Transverse colon (tissue), 4 donors: ENCODE measurements at regions of chr6 and their contacts with region 1.

Region 1: DNA sequence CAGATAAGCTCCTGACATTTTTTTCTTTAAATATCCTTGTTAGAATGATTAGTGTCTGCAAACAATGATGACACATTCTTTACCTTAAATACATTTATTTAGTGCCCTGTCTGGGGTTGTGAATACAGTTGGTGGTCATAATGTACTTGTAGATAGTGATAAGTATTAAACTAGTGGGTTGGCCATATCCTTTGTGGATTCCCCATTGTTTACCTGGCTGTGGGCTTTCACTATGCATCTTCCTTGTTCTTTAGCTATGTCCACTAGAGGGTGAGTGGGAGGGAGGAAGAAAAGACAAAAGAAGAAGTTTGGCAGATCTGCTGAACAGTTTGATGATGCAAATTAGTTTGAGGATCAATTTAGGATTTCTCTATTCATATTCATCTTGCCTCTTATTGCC is 15.7 kb downstream of the HS3ST5 start:
- DNase-seq: no peak
- H3K4me3 ChIP-seq: no peak overlapping the region
- H3K27ac ChIP-seq: no peak overlapping the region
- H3K4me1 ChIP-seq: no peaks in the 10 kb centered on the region
- H3K27me3 ChIP-seq: no peaks in the 10 kb centered on the region
- CTCF ChIP-seq: no peak
- EP300 ChIP-seq: no peak
- POLR2A ChIP-seq: no peak

Region 2: GRCh38 chr6:114108119-114109002 is 218.7 kb before region 1 on chr6:
- in situ Hi-C with region 1: no loop called
- intact Hi-C with region 1: loop called (anchors 10 kb)
- DNase-seq: peak; percentile 56
- H3K4me3 ChIP-seq: no peak overlapping the region
- H3K27ac ChIP-seq: no peak overlapping the region
- H3K4me1 ChIP-seq: no peaks in the 10 kb centered on the region
- H3K27me3 ChIP-seq: no peaks in the 10 kb centered on the region
- CTCF ChIP-seq: peak; percentile 18 to 50 (median 32)
- EP300 ChIP-seq: no peak
- POLR2A ChIP-seq: no peak

Region 3: DNA sequence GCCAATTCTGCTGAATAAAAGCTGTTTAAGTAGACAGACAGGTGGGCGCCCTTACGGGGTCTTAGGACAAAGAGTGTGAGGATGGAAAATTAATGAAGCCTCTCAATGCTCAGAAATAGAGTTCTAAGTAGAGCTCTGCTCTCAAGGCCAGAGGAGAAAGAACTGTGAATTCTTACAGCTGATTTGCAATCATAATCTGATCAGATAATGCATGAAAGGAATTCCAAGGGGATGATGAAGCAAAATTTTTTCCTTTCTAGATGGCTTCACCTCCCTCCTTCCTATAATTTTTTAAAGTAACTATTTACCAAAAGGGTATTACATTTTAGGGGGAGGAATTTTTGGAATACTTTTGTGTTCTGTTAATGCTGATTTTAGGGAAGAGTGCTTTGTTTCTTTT is 323.8 kb after region 1 on chr6:
- in situ Hi-C with region 1: no loop called
- intact Hi-C with region 1: no loop called
- DNase-seq: no peak
- H3K4me3 ChIP-seq: no peak overlapping the region
- H3K27ac ChIP-seq: no peak overlapping the region
- H3K4me1 ChIP-seq: no peaks in the 10 kb centered on the region
- H3K27me3 ChIP-seq: no peaks in the 10 kb centered on the region
- CTCF ChIP-seq: no peak
- EP300 ChIP-seq: no peak
- POLR2A ChIP-seq: no peak

Region 4: DNA sequence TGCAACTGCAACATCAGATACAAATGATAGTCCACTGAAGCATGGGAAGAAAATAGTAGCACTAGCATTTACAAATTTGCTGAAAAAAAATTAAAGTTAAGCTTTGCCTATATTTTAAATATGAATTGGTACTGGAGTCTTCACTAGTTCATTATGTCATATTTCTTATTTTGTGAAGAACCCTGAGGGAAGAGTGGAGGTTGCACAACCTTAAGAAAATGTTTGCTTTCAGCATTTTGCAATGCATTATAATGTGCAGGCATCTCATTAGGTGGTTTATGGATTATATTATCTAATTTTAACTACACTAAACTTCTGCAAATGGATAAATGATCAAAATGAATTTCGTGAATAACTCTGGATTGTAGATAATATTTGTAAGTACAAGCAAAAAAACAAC is 406.5 kb after region 1 on chr6:
- in situ Hi-C with region 1: no loop called
- intact Hi-C with region 1: loop called (anchors 5 kb)
- DNase-seq: no peak
- H3K4me3 ChIP-seq: no peak overlapping the region
- H3K27ac ChIP-seq: no peak overlapping the region
- H3K4me1 ChIP-seq: no peaks in the 10 kb centered on the region
- H3K27me3 ChIP-seq: no peaks in the 10 kb centered on the region
- CTCF ChIP-seq: no peak
- EP300 ChIP-seq: no peak
- POLR2A ChIP-seq: no peak